ENCODE measurements at regions of chr17 and their contacts with region 1.

Region 1: DNA sequence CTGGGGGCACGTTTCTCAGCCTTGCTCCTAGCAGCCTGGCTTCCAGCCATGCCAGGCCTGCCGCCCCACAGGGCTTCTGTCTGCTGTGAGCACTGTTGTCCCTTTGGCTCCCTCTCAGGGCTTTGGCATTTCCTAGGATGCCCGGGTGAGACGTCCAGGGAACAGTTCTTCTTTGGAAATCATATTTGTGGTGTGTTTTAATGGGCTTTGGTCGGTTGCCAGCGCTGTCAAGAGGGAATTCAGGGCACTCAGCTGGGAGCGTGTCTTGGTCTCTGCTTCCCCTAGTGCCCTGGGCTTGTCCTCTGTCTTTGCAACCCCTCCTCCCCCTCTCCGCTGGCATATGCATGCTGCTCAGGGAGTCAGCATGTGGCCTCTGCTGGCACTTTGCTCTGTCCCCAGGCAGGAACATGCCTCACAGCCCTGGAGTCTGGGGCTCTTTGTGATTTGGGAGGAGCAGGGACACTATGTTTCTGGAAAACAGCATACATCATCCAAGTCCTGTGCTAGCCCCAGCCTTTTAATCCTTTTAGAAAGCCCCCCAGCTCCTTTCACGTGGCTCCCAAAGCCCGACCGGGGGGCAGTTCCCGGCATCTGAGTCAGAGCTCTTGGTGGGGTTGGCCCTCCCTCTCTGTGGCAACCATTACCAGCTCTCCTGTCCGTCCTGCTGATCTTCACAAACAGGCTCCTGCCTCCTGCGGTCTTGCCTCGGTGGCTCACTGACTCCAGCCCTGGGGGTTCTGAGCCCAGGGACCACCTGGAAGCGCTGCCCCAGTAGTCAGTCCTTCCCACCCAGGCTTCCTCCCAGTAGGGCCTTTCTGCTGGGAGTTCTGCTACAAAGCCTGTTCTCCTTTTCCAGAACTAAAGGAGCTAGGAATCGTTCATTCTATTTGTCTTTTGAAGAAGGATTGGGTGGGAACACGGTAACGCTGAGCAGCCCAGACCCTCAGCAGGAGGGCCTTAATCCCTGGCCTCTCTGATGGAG is 26.7 kb downstream of the SAP30BP start:
- DNase-seq: peak; percentile 84
- H3K4me3 ChIP-seq: no peak overlapping the region; the same call in 1 of the 2 replicates
- CTCF ChIP-seq: peak; percentile 41

Region 2: DNA sequence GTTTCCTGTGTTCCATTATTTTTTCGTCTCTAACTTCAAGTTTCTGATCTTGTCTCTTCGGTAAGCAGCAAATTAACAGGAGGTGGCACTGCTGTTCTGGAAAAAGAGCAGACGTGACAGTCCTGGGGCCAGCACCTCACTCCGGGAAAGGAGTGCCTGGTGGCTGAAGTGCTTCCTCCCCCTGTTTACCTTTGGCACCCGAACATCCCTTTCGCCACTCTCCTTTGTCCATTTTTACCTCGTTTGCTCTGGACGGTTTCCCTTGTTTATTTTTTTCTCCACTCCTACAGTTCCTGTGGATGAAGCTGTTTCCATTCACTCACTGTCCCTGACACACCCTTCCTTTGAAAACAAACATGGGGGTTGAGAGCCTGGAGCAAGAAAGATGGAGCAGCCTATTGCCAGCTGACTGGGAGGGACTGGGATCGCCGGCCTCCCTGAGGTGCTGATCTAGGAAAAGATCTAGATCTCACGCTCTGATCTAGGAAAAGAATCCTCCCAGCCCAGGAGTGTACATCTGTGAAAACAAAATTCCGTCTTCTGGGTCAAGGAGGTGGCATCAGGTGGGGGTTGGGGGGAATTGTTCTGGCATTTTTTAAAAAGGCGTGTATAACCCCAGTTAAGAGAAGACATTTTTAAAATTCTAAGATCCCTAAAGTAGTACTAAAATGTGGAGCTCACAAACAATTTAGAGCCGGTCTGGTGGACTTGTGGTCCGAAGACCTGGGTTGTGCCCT is 13.9 kb before region 1 on chr17:
- CTCF ChIA-PET with region 1: interaction called, 121 read pairs
- POLR2A ChIA-PET with region 1: interaction called, 9 read pairs
- DNase-seq: no peak
- H3K4me3 ChIP-seq: no peak overlapping the region
- CTCF ChIP-seq: no peak

Measured in AG04449 (cell line).